Breast epithelium (tissue), 4 donors: ENCODE measurements at regions of chr12 and their contacts with region 1.

Region 1: GRCh38 chr12:6825398-6826124 is 2.6 kb upstream of the P3H3 start:
- DNase-seq: peak; percentile 75 to 89
- H3K4me3 ChIP-seq: peak overlapping the region in 2 of 3 donors; percentile 23 to 56
- H3K27ac ChIP-seq: peak overlapping the region in 1 of 2 donors; percentile 8
- H3K4me1 ChIP-seq: peaks cover 0 to 14% of the 10 kb centered on the region in 2 donors
- H3K27me3 ChIP-seq: peaks cover 5 to 19% of the 10 kb centered on the region in 2 donors
- CTCF ChIP-seq: peak; percentile 90 to 92 (median 91)
- POLR2A ChIP-seq: no peak

Region 2: GRCh38 chr12:6613776-6614512 is 211.6 kb before region 1 on chr12:
- intact Hi-C with region 1: loop called (anchors 10 kb)
- DNase-seq: peak; percentile 93
- H3K4me3 ChIP-seq: peak overlapping the region in 2 of 3 donors; percentile 25 to 52
- H3K27ac ChIP-seq: peak overlapping the region; percentile 92 to 98
- H3K4me1 ChIP-seq: peaks cover 5 to 23% of the 10 kb centered on the region in 2 donors
- H3K27me3 ChIP-seq: no peaks in the 10 kb centered on the region
- CTCF ChIP-seq: peak in 1 of 3 donors; percentile 13
- POLR2A ChIP-seq: no peak

Region 3: DNA sequence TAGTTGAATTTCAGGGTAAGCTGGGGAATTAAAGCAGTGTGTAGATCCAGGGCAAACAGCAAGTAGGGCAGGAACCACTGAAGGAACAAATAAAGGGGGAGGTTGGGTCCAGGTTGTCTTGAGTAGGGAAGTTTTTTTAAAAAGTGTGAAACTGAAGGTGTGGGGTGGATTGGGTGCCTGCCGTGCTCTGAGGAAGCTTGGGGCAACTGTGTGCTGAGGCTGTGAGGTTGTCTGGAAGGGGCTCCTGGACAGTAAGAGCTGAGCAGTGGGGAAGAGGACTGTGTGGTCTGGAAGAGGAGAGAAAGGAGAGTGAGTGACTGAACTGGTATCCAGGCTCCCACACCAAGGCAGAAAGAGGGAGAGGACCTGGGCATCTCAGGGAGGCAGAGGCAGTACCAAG is 14.8 kb before region 1 on chr12:
- intact Hi-C with region 1: no loop called
- DNase-seq: no peak
- H3K4me3 ChIP-seq: no peak overlapping the region
- H3K27ac ChIP-seq: no peak overlapping the region
- H3K4me1 ChIP-seq: no peaks in the 10 kb centered on the region
- H3K27me3 ChIP-seq: no peaks in the 10 kb centered on the region
- CTCF ChIP-seq: no peak
- POLR2A ChIP-seq: no peak